Natural killer cell (primary cell): ENCODE measurements at regions of chr2 and their contacts with region 1.

Region 1: GRCh38 chr2:67840460-67841068 is 222.2 kb downstream of the C1D start:
- DNase-seq: peak; percentile 27 to 54
- ATAC-seq: peak; percentile 76 to 99 (median 93)
- H3K4me3 ChIP-seq: no peak overlapping the region
- H3K4me3 Mint-ChIP-seq: no peak overlapping the region
- H3K27ac ChIP-seq: no peak overlapping the region
- H3K27ac Mint-ChIP-seq: peak overlapping the region in 1 of 2 donors; percentile 15
- H3K4me1 ChIP-seq: no peaks in the 10 kb centered on the region
- H3K4me1 Mint-ChIP-seq: peaks cover 10 to 14% of the 10 kb centered on the region in 2 donors
- H3K27me3 ChIP-seq: no peaks in the 10 kb centered on the region
- H3K27me3 Mint-ChIP-seq: peaks cover 15 to 19% of the 10 kb centered on the region in 2 donors
- CTCF ChIP-seq: peak; percentile 83

Region 2: GRCh38 chr2:66429071-66429477 is 1411.5 kb before region 1 on chr2:
- intact Hi-C with region 1: loop called (anchors 1 kb)
- DNase-seq: peak in 1 of 2 donors; percentile 8
- ATAC-seq: peak in 2 of 3 donors; percentile 57 to 70
- H3K4me3 ChIP-seq: no peak overlapping the region
- H3K4me3 Mint-ChIP-seq: no peak overlapping the region
- H3K27ac ChIP-seq: no peak overlapping the region
- H3K27ac Mint-ChIP-seq: no peak overlapping the region
- H3K4me1 ChIP-seq: peaks cover 19% of the 10 kb centered on the region
- H3K4me1 Mint-ChIP-seq: peaks cover 13 to 16% of the 10 kb centered on the region in 2 donors
- H3K27me3 ChIP-seq: peaks cover 19% of the 10 kb centered on the region
- H3K27me3 Mint-ChIP-seq: peaks cover 57 to 75% of the 10 kb centered on the region in 2 donors
- CTCF ChIP-seq: peak; percentile 54

Region 3: GRCh38 chr2:67451086-67451832 is 389.3 kb before region 1 on chr2:
- intact Hi-C with region 1: loop called (anchors 1 kb)
- DNase-seq: no peak
- ATAC-seq: no peak
- H3K4me3 ChIP-seq: no peak overlapping the region
- H3K4me3 Mint-ChIP-seq: no peak overlapping the region
- H3K27ac ChIP-seq: no peak overlapping the region
- H3K27ac Mint-ChIP-seq: no peak overlapping the region
- H3K4me1 ChIP-seq: no peaks in the 10 kb centered on the region
- H3K4me1 Mint-ChIP-seq: no peaks in the 10 kb centered on the region
- H3K27me3 ChIP-seq: no peaks in the 10 kb centered on the region
- H3K27me3 Mint-ChIP-seq: peaks cover 2 to 17% of the 10 kb centered on the region in 2 donors
- CTCF ChIP-seq: no peak

Region 4: DNA sequence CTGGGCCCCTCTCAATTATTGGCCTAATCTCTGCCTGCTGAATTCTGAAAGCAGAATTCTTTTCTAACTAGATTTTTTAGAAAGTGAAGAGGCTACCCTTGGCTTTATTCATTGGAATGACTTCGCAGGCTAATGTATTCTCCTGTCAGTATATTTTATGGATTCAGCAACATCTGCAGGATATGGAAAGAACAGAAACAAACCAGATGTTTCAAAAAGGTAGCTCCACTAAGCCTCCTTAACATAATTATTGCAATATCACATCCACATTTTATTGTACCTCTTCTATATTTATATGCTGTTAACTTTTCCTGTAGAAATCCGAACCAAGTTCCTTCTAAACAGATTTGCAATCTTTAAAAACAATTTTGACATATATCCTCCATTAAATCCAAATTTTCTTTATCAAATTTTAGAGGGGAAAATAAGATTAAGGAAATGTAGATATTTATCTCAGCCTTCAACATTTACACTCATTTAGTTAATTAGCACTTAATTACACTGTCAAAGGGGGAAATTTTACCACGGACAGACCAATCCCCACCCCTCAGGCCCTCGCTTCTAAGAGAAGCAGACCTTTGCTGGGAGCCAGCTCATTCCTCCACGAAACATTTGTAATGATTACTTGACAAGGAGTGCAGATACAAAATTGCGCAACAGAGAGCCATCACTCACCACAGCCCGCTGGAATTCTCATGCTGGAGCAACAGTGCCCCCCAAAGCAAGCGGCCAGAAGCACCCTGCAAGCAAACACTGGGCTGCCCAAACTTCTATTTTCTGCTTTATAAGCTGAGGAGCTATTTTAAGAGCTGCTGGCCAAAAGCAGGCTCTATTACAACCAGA is 190.1 kb before region 1 on chr2:
- intact Hi-C with region 1: loop called (anchors 10 kb)
- DNase-seq: peak in 1 of 2 donors; percentile 46
- ATAC-seq: peak; percentile 61 to 86 (median 83)
- H3K4me3 ChIP-seq: no peak overlapping the region
- H3K4me3 Mint-ChIP-seq: peak overlapping the region; percentile 14
- H3K27ac ChIP-seq: no peak overlapping the region
- H3K27ac Mint-ChIP-seq: peak overlapping the region in 1 of 2 donors; percentile 42
- H3K4me1 ChIP-seq: peaks cover 5% of the 10 kb centered on the region
- H3K4me1 Mint-ChIP-seq: peaks cover 42 to 43% of the 10 kb centered on the region in 2 donors
- H3K27me3 ChIP-seq: no peaks in the 10 kb centered on the region
- H3K27me3 Mint-ChIP-seq: no peaks in the 10 kb centered on the region
- CTCF ChIP-seq: peak; percentile 56

Region 5: DNA sequence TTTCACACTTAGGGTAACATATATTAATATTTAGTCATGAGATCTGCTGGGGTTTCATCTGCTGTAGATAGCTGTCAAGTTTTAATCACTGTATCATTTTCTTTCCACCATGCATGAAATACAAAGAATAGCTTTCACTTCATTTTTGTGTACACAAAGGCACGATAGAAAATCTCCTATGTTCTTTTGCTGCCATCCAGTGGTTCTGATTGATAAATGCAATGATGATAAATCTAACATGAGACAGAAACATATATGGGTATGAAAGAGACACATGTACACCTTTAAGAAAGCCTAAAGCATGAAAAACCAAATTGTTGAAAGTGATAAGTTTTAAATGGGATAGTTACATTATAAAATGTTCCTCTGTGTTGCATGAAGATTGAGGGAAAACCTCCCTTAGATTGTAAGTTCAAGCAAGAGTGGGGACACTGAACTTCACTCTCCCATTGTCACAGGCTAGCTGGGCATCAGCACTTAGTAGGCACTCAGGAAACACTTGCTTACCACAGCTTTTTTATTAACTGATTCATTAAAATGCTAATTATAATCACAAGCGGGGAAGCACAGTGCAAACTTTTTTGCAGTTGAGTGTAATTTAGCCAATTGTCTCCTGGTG is 191.1 kb after region 1 on chr2:
- intact Hi-C with region 1: loop called (anchors 10 kb)
- DNase-seq: peak in 1 of 2 donors; percentile 64
- ATAC-seq: peak; percentile 53 to 68 (median 60)
- H3K4me3 ChIP-seq: no peak overlapping the region
- H3K4me3 Mint-ChIP-seq: no peak overlapping the region
- H3K27ac ChIP-seq: no peak overlapping the region
- H3K27ac Mint-ChIP-seq: no peak overlapping the region
- H3K4me1 ChIP-seq: no peaks in the 10 kb centered on the region
- H3K4me1 Mint-ChIP-seq: no peaks in the 10 kb centered on the region
- H3K27me3 ChIP-seq: peaks cover 4% of the 10 kb centered on the region
- H3K27me3 Mint-ChIP-seq: peaks cover 3 to 15% of the 10 kb centered on the region in 2 donors
- CTCF ChIP-seq: peak; percentile 63